Activated CD8-positive, alpha-beta T cell treated with anti-CD3 and anti-CD28 coated beads for 36 hours (primary cell): ENCODE measurements at regions of chr16 and their contacts with region 1.

Region 1: GRCh38 chr16:70289229-70290098 is at the start of gene AARS1:
- DNase-seq: peak; percentile 97
- ATAC-seq: peak; percentile 98
- H3K4me3 Mint-ChIP-seq: peak within 1 kb of the TSS; percentile 99
- H3K27ac Mint-ChIP-seq: peak within 1 kb of the TSS; percentile 100
- H3K4me1 Mint-ChIP-seq: peaks cover 23% of the 10 kb centered on the region
- H3K27me3 Mint-ChIP-seq: no peaks in the 10 kb centered on the region
- CTCF ChIP-seq: no peak
- total RNA-seq, gene AARS1: 160 to 162 TPM

Region 2: DNA sequence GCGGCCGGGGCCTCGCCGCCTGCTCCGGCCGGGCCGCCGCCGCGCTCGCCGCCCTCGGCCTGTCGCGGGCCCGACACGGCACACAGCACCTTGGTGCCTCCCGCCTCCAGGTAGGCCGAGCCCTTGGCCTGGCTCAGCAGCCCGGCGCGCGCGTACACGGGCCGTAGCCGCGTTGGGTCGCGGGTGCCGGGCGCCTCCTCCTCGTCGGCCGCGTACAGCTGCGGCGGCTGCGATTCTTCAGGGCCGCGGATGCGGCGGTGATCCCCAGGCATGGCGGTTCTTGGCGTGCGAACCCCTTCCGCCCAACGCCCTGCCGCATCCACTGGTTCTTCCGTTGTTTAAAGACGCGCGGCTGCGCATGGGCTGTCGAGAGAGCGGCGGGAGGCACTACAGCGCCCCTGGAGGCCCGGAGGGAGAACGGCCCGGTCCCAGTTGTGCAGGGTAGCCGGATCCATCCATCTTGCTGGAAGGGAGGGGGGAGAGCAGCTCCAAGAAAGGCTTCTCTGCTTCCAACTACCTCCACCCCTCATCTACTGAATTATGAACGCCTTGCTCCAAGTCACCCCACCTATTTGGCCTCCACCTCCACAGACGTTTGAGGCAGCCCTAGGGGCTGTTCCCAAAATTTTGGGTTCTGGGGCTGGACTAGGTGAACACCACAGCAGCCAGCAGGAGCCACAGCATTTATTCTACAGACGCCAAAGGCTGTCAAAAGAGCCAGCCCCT is 37.7 kb before region 1 on chr16 and contains the start of gene EXOSC6:
- CTCF ChIA-PET with region 1: interaction called, 16 read pairs
- POLR2A ChIA-PET with region 1: interaction called, 16 read pairs
- intact Hi-C with region 1: no loop called
- DNase-seq: peak; percentile 96
- ATAC-seq: peak; percentile 97
- H3K4me3 Mint-ChIP-seq: peak within 1 kb of the TSS; percentile 88
- H3K27ac Mint-ChIP-seq: peak within 1 kb of the TSS; percentile 93
- H3K4me1 Mint-ChIP-seq: peaks cover 19% of the 10 kb centered on the region
- H3K27me3 Mint-ChIP-seq: no peaks in the 10 kb centered on the region
- CTCF ChIP-seq: peak; percentile 84
- total RNA-seq, gene EXOSC6: 23.6 to 25.0 TPM

Region 3: GRCh38 chr16:70267516-70267915 is 21.9 kb before region 1 on chr16:
- CTCF ChIA-PET with region 1: interaction called, 10 read pairs
- POLR2A ChIA-PET with region 1: interaction called, 4 read pairs
- intact Hi-C with region 1: no loop called
- DNase-seq: no peak
- ATAC-seq: peak; percentile 58
- H3K4me3 Mint-ChIP-seq: no peak overlapping the region
- H3K27ac Mint-ChIP-seq: no peak overlapping the region
- H3K4me1 Mint-ChIP-seq: no peaks in the 10 kb centered on the region
- H3K27me3 Mint-ChIP-seq: no peaks in the 10 kb centered on the region
- CTCF ChIP-seq: peak; percentile 68

Region 4: DNA sequence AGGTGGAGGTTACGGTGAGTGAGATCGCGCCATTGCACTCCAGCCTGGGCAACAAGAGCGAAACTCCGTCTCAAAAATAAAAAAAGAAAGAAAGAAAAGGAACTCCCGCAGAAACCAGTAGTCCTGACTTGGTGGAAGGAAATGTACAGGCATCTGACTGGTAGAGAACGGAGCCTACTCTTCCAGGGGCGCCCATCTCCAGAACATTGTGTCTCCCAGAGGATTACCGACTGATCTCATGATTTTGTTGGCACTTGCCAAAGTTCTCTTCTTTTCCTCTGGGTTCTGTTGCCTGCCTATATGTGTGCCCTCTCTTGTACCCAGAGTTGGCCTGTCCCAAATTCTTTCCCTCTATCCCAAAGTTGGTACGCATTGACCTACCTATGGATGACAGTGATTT is 81.5 kb after region 1 on chr16:
- CTCF ChIA-PET with region 1: no interaction called
- POLR2A ChIA-PET with region 1: no interaction called
- intact Hi-C with region 1: no loop called
- DNase-seq: no peak
- ATAC-seq: no peak
- H3K4me3 Mint-ChIP-seq: no peak overlapping the region
- H3K27ac Mint-ChIP-seq: no peak overlapping the region
- H3K4me1 Mint-ChIP-seq: peaks cover 2% of the 10 kb centered on the region
- H3K27me3 Mint-ChIP-seq: no peaks in the 10 kb centered on the region
- CTCF ChIP-seq: no peak

Region 5: GRCh38 chr16:70523076-70523742 is 233.7 kb after region 1 on chr16 and contains the start of gene COG4:
- CTCF ChIA-PET with region 1: no interaction called
- POLR2A ChIA-PET with region 1: interaction called, 11 read pairs
- intact Hi-C with region 1: loop called (anchors 10 kb)
- DNase-seq: peak; percentile 96
- ATAC-seq: peak; percentile 89
- H3K4me3 Mint-ChIP-seq: peak within 1 kb of the TSS; percentile 88
- H3K27ac Mint-ChIP-seq: peak within 1 kb of the TSS; percentile 98
- H3K4me1 Mint-ChIP-seq: peaks cover 44% of the 10 kb centered on the region
- H3K27me3 Mint-ChIP-seq: no peaks in the 10 kb centered on the region
- CTCF ChIP-seq: no peak
- total RNA-seq, gene COG4: 38.0 to 39.0 TPM